ENCODE measurements at regions of chr10 and their contacts with region 1.

Region 1: GRCh38 chr10:6838118-6838517 is 258.0 kb upstream of the PRKCQ start:
- DNase-seq: no peak
- ATAC-seq: peak; percentile 49; the same call in 2 of the 3 replicates
- H3K4me3 ChIP-seq: no peak overlapping the region
- H3K27ac ChIP-seq: no peak overlapping the region
- H3K4me1 ChIP-seq: no peaks in the 10 kb centered on the region
- H3K27me3 ChIP-seq: peaks cover 0 to 2% of the 10 kb centered on the region in 2 experiments; a peak in 1 of 4 replicates
- CTCF ChIP-seq: peak; percentile 28 to 35 (median 32); a peak in 4 of 6 replicates
- EP300 ChIP-seq: no peak
- POLR2A ChIP-seq: no peak
- RAD21 ChIP-seq: peak; percentile 55

Region 2: GRCh38 chr10:6737758-6738505 is 100.2 kb before region 1 on chr10:
- CTCF ChIA-PET with region 1: no interaction called
- POLR2A ChIA-PET with region 1: no interaction called
- RAD21 ChIA-PET with region 1: no interaction called
- SMC1A ChIA-PET with region 1: no interaction called
- in situ Hi-C with region 1: loop called (anchors 25 kb)
- intact Hi-C with region 1: no loop called
- DNase-seq: no peak
- ATAC-seq: no peak
- H3K4me3 ChIP-seq: no peak overlapping the region
- H3K27ac ChIP-seq: no peak overlapping the region
- H3K4me1 ChIP-seq: no peaks in the 10 kb centered on the region
- H3K27me3 ChIP-seq: no peaks in the 10 kb centered on the region; a peak in 2 of 4 replicates
- CTCF ChIP-seq: no peak
- EP300 ChIP-seq: no peak
- POLR2A ChIP-seq: no peak
- RAD21 ChIP-seq: no peak